PC-3 (cell line): ENCODE measurements at regions of chr13 and their contacts with region 1.

Region 1: DNA sequence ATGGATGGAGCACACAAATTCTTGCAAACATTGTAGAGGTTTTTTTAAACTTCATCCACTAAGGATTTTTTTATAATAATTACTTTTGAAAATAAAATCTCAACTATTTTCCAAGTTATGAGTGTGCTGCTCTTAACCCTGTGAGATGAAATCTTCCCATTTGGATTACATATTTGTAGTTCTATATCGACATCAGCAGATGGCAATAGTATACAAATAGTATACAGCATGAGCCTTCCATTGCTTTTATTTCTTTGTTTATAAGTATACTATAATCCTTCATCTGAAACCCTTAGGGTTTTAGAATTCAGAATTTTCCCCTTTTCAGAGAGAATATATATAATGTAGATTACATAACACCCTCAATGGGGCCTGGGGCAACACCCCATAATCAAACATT is 70.5 kb downstream of the GJA3 start:
- DNase-seq: peak; percentile 43
- ATAC-seq: peak; percentile 71
- H3K4me3 ChIP-seq: no peak overlapping the region
- H3K27ac ChIP-seq: no peak overlapping the region
- H3K4me1 ChIP-seq: no peaks in the 10 kb centered on the region
- H3K27me3 ChIP-seq: no peaks in the 10 kb centered on the region
- CTCF ChIP-seq: peak; percentile 62; the same call in 1 of the 2 replicates

Region 2: GRCh38 chr13:19681517-19681916 is 408.8 kb before region 1 on chr13:
- CTCF ChIA-PET with region 1: no interaction called
- POLR2A ChIA-PET with region 1: interaction called, 11 read pairs
- intact Hi-C with region 1: no loop called
- DNase-seq: no peak
- ATAC-seq: no peak
- H3K4me3 ChIP-seq: no peak overlapping the region
- H3K27ac ChIP-seq: no peak overlapping the region
- H3K4me1 ChIP-seq: peaks cover 12% of the 10 kb centered on the region
- H3K27me3 ChIP-seq: no peaks in the 10 kb centered on the region
- CTCF ChIP-seq: no peak

Region 3: GRCh38 chr13:20073775-20074174 is 16.6 kb before region 1 on chr13:
- CTCF ChIA-PET with region 1: no interaction called
- POLR2A ChIA-PET with region 1: no interaction called
- intact Hi-C with region 1: no loop called
- DNase-seq: no peak
- ATAC-seq: no peak
- H3K4me3 ChIP-seq: no peak overlapping the region
- H3K27ac ChIP-seq: no peak overlapping the region
- H3K4me1 ChIP-seq: no peaks in the 10 kb centered on the region
- H3K27me3 ChIP-seq: no peaks in the 10 kb centered on the region
- CTCF ChIP-seq: no peak

Region 4: GRCh38 chr13:20127577-20128466 is 37.5 kb after region 1 on chr13:
- CTCF ChIA-PET with region 1: no interaction called
- POLR2A ChIA-PET with region 1: no interaction called
- intact Hi-C with region 1: loop called (anchors 2 kb)
- DNase-seq: peak; percentile 66
- ATAC-seq: peak; percentile 78
- H3K4me3 ChIP-seq: peak overlapping the region; percentile 77
- H3K27ac ChIP-seq: peak overlapping the region; percentile 60
- H3K4me1 ChIP-seq: peaks cover 17% of the 10 kb centered on the region
- H3K27me3 ChIP-seq: no peaks in the 10 kb centered on the region
- CTCF ChIP-seq: peak; percentile 72